Activated T-helper 1 cell treated with anti-CD3 and anti-CD28 coated beads, Interleukin-12 subunit alpha, Interleukin-12 subunit beta, Interleukin-2, Interleukin-4 antibody, amounts not matched to agents 30 ng/mL and 10 ng/mL and 1 ng/mL, durations not matched to agents 14 hours and 24 hours and 36 hours (primary cell): ENCODE measurements at regions of chr3 and their contacts with region 1.

Region 1: DNA sequence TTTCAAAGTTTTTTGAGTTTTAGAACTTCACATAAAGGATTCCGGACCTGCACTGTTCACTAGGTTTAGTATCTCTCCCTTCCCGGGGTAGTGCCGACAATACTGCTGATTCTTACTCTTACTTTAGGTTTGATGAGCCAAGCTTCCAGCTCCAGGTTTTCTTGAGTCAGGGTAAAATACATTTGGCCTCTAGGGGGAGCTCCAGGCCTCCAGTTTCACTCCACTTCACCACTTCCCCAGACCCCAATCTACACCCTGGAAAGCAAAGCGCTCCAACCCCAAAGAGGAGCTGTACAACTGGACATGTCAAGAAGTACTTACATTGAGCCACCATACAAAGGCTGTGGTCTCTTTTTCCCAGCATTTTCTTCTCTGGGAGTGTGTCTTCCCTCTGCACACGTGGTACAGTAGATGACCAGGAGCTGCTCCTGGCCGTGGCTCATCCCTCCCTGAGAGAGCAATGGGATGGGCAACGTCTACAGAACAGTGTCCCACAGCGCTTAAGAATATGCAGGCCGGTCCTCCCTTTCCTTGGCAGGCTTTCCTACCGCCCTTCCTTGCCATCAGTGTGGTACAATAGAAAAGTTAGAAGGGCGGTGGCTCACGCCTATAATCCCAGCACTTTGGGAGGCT is 93.9 kb upstream of the CCDC80 start:
- DNase-seq: peak; percentile 43
- H3K4me3 Mint-ChIP-seq: no peak overlapping the region
- H3K27ac Mint-ChIP-seq: no peak overlapping the region
- H3K4me1 Mint-ChIP-seq: peaks cover 47% of the 10 kb centered on the region
- H3K27me3 Mint-ChIP-seq: peaks cover 2% of the 10 kb centered on the region

Region 2: DNA sequence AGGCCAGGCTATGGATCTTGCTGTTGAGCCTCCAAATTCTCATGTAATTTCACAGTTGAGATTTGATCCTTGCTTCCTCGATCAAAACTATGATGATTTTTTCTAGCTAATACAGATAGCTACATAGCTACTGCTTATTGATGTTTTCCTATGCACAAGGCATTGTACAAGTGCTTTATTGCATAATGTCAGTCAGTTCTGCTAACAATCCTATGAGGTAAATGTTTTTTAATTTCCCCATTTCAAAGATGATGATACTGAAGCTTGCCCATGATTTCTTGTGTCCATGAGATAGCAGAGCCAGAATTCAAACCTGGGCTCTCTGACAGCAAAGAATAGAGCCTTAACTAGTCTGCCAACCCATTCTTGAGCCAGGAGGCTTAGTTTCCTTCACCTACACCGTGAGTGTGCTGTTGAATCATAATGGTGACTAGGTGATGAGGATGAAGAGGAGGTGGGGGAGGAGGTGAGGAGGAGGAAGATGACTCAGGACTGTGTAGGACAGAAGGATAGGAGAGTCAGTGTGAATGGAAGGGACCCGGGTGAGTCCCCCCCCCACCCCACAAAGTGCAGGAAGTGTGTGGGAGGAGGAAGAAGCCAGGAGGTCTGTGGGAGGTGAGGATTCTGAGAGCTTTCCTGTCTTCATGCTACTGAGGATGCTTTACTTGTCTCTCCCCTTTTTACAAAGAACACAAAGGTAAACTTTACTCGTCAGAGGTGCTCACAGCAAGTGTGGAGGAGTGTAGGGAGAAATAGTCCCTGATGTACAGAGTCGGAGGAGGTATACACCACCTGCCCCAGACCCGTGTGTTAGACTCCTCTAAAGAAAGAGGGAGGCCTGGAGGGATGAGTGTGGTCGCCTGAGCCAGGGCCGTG is 732.5 kb before region 1 on chr3:
- intact Hi-C with region 1: no loop called
- DNase-seq: no peak
- H3K4me3 Mint-ChIP-seq: peak overlapping the region; percentile 34
- H3K27ac Mint-ChIP-seq: peak overlapping the region; percentile 89
- H3K4me1 Mint-ChIP-seq: peaks cover 60% of the 10 kb centered on the region
- H3K27me3 Mint-ChIP-seq: no peaks in the 10 kb centered on the region

Region 3: DNA sequence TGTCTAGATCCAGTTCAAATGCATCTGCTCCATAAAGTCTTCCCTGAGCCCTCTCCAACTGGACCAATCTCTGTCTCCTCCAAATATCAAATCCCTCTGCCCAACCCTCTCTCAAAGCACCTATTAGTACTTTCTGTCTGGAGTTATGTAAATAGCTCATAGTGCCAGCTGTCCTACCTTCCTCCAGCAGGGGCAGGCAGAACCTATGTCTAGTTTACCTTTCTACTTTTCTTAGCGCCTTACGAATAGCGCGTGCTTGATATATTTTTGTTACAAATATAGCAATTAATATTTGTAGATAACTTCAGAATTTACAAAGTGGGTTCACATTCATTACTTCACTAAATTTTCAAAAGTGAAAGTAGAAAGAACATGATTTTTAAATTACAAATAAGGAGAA is 79.9 kb before region 1 on chr3:
- intact Hi-C with region 1: no loop called
- DNase-seq: no peak
- H3K4me3 Mint-ChIP-seq: no peak overlapping the region
- H3K27ac Mint-ChIP-seq: no peak overlapping the region
- H3K4me1 Mint-ChIP-seq: peaks cover 15% of the 10 kb centered on the region
- H3K27me3 Mint-ChIP-seq: no peaks in the 10 kb centered on the region

Region 4: DNA sequence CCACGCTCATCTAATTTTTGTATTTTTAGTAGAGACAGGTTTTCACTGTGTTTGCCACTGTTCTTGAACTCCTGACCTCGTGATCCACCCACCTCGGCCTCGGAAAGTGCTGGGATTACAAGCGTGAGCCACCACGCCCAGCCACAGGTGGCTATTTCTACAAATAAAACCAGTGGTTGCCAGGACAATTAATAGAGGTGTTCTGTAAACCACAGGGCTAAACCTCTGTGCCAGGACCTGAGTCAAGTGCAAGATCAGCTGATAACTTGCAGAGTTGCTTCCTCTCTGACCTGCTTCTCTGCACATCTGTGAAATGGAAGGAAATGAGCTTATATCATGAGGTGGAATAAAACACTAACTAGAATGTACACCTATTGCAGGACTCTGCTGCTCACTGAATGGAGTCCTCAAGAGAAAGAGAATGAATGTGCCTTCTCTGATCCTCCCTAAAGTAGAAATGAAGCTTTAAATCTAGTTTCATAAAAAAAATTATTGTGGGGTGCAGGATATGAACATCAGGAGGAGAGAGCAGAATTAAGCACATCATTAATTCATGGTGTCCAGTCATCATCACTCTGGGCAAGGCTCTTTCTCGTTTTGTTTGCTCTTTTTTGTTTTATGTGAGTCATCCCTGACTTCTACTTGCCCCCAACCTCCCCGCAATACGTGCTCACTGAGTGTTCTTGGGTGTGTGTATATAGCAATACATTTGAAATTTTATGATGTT is 39.2 kb after region 1 on chr3:
- intact Hi-C with region 1: loop called (anchors 5 kb)
- DNase-seq: no peak
- H3K4me3 Mint-ChIP-seq: no peak overlapping the region
- H3K27ac Mint-ChIP-seq: no peak overlapping the region
- H3K4me1 Mint-ChIP-seq: peaks cover 33% of the 10 kb centered on the region
- H3K27me3 Mint-ChIP-seq: peaks cover 6% of the 10 kb centered on the region

Region 5: DNA sequence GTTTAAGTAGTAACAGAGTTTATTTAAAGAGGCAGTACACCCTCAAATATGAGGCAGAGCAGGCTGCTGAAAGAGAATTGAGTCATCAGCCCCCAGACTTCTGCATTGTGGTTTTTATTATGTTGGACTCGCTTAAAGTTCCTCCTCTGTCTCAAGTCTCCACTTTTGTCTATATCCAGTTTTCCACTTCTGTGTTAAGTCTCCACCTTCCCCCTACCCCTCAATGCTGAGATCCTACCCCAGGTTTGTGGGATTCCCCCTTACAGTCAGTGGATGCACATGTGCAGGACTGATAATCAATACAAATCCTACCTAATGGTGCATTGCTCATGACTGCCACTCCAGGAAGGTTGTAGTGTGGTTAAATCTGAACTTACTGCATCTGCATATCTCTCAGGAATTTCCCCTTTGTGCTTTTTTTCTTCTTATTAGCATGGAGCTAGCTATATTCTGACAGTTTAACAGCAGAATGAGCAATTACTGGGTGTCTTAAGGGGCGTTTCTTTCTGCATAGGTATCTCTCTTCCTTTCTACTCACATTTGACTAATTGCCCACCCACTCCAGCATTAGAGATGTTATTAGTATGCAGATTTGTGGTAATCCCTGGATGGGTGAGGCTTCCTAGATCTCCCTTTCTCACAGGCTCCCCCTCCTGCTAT is 123.7 kb after region 1 on chr3:
- intact Hi-C with region 1: loop called (anchors 2 kb)
- DNase-seq: no peak
- H3K4me3 Mint-ChIP-seq: peak overlapping the region; percentile 13
- H3K27ac Mint-ChIP-seq: peak overlapping the region; percentile 71
- H3K4me1 Mint-ChIP-seq: peaks cover 35% of the 10 kb centered on the region
- H3K27me3 Mint-ChIP-seq: no peaks in the 10 kb centered on the region

Region 6: DNA sequence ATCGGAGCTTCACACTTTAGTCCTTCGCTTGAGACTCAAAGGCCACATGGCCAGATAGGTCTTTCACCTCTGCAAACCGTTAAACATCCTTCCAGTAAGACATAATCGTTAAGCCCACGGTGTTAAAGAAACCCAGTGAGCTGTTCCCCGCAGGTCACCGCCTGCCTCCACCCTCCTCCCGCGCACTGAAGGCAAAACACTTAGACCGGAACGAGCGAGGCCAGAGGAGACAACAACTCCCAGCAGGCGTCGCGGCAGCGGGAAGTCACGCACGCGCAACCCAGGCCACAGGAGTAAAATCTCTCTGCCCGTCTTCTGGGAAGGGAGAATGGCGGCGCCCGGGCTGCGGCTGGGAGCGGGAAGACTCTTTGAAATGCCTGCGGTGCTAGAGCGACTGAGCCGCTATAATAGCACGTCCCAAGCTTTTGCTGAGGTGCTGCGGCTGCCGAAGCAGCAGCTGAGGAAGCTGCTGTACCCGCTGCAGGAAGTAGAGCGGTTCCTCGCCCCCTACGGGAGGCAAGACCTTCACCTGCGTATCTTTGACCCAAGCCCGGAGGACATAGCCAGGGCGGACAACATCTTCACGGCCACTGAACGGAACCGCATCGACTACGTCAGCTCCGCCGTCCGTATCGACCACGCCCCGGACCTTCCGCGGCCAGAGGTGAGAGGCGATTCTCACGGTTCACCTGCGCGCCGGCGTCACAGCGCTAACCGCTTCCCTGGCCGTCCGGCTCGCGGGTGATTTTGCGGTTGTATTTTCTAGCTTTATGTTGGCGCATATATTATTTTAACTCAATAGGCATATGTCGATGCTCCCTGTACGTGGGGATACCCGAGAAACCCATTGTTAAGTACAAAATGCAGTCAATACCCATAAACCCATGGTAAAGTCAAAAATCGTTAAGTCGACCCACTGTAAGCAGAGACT is 256.1 kb after region 1 on chr3 and contains the start of gene GTPBP8:
- intact Hi-C with region 1: loop called (anchors 5 kb)
- DNase-seq: peak; percentile 81
- H3K4me3 Mint-ChIP-seq: peak within 1 kb of the TSS; percentile 90
- H3K27ac Mint-ChIP-seq: peak within 1 kb of the TSS; percentile 93
- H3K4me1 Mint-ChIP-seq: peaks cover 79% of the 10 kb centered on the region
- H3K27me3 Mint-ChIP-seq: no peaks in the 10 kb centered on the region
- total RNA-seq, gene GTPBP8: 22.6 and 25.0 TPM in 2 replicates